ENCODE measurements at regions of chr13 and their contacts with region 1.

Region 1: GRCh38 chr13:73228546-73228945 is 169.7 kb downstream of the KLF5 start:
- DNase-seq: peak; percentile 78
- H3K4me3 Mint-ChIP-seq: no peak overlapping the region
- H3K27ac Mint-ChIP-seq: no peak overlapping the region
- H3K4me1 Mint-ChIP-seq: peaks cover 27% of the 10 kb centered on the region
- H3K27me3 Mint-ChIP-seq: peaks cover 4% of the 10 kb centered on the region

Region 2: DNA sequence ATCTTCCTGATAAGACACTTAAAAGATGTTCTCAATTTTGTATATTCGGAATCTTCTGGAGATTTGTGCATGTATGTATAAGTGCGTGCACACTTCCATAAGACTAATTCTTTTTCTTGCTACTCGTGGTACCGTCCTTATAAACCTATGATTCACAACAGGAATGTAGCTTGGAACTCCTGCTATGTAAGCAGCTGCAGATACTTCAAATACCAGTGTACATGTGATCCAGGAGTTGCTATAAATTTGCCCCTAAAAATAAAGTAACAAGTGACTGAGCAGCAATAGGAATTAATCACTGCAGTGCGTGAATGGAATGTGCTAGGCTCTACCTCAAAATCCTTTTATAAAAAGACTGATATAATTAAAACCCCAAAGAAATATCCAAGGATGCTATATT is 45.2 kb after region 1 on chr13:
- intact Hi-C with region 1: loop called (anchors 5 kb)
- DNase-seq: no peak
- H3K4me3 Mint-ChIP-seq: no peak overlapping the region
- H3K27ac Mint-ChIP-seq: no peak overlapping the region
- H3K4me1 Mint-ChIP-seq: peaks cover 29% of the 10 kb centered on the region
- H3K27me3 Mint-ChIP-seq: no peaks in the 10 kb centered on the region